Activated B cell treated with CpG ODN at 0.5 μM for 24 hours (primary cell): ENCODE measurements at regions of chr17 and their contacts with region 1.

Region 1: GRCh38 chr17:7989781-7990655 is 12.4 kb upstream of the GUCY2D start:
- DNase-seq: peak; percentile 96
- ATAC-seq: peak; percentile 94
- H3K4me3 Mint-ChIP-seq: peak overlapping the region; percentile 77
- H3K27ac Mint-ChIP-seq: peak overlapping the region; percentile 75
- H3K4me1 Mint-ChIP-seq: peaks cover 17% of the 10 kb centered on the region
- H3K27me3 Mint-ChIP-seq: peaks cover 9% of the 10 kb centered on the region
- CTCF ChIP-seq: no peak

Region 2: GRCh38 chr17:7825206-7825990 is 164.6 kb before region 1 on chr17:
- CTCF ChIA-PET with region 1: interaction called, 7 read pairs
- POLR2A ChIA-PET with region 1: no interaction called
- intact Hi-C with region 1: loop called (anchors 1 kb)
- DNase-seq: no peak
- ATAC-seq: no peak
- H3K4me3 Mint-ChIP-seq: no peak overlapping the region
- H3K27ac Mint-ChIP-seq: no peak overlapping the region
- H3K4me1 Mint-ChIP-seq: no peaks in the 10 kb centered on the region
- H3K27me3 Mint-ChIP-seq: peaks cover 18% of the 10 kb centered on the region
- CTCF ChIP-seq: no peak

Region 3: GRCh38 chr17:7867881-7868329 is 122.1 kb before region 1 on chr17:
- CTCF ChIA-PET with region 1: interaction called, 77 read pairs
- POLR2A ChIA-PET with region 1: no interaction called
- intact Hi-C with region 1: no loop called
- DNase-seq: no peak
- ATAC-seq: no peak
- H3K4me3 Mint-ChIP-seq: no peak overlapping the region
- H3K27ac Mint-ChIP-seq: no peak overlapping the region
- H3K4me1 Mint-ChIP-seq: peaks cover 11% of the 10 kb centered on the region
- H3K27me3 Mint-ChIP-seq: no peaks in the 10 kb centered on the region
- CTCF ChIP-seq: no peak

Region 4: GRCh38 chr17:8001976-8002720 is 12.1 kb after region 1 on chr17 and contains the start of gene GUCY2D:
- CTCF ChIA-PET with region 1: interaction called, 15 read pairs
- POLR2A ChIA-PET with region 1: no interaction called
- intact Hi-C with region 1: no loop called
- DNase-seq: no peak
- ATAC-seq: peak; percentile 61
- H3K4me3 Mint-ChIP-seq: peak within 1 kb of the TSS; percentile 83
- H3K27ac Mint-ChIP-seq: no peak within 1 kb of the TSS
- H3K4me1 Mint-ChIP-seq: peaks cover 7% of the 10 kb centered on the region
- H3K27me3 Mint-ChIP-seq: peaks cover 31% of the 10 kb centered on the region
- CTCF ChIP-seq: no peak
- total RNA-seq, gene GUCY2D: not detected in 2 replicates